Prostate gland (tissue), 2 donors: ENCODE measurements at regions of chr14 and their contacts with region 1.

Region 1: GRCh38 chr14:39169541-39169900 is 612 bp downstream of the TRAPPC6B start:
- DNase-seq: peak; percentile 32
- H3K4me3 ChIP-seq: peak overlapping the region; percentile 74 to 91
- H3K27ac ChIP-seq: peak overlapping the region; percentile 97 to 98
- H3K4me1 ChIP-seq: peaks cover 9% of the 10 kb centered on the region
- H3K27me3 ChIP-seq: no peaks in the 10 kb centered on the region
- CTCF ChIP-seq: no peak
- POLR2A ChIP-seq: no peak

Region 2: GRCh38 chr14:39025810-39026627 is 143.5 kb before region 1 on chr14:
- intact Hi-C with region 1: no loop called
- DNase-seq: no peak
- H3K4me3 ChIP-seq: no peak overlapping the region
- H3K27ac ChIP-seq: no peak overlapping the region
- H3K4me1 ChIP-seq: no peaks in the 10 kb centered on the region
- H3K27me3 ChIP-seq: no peaks in the 10 kb centered on the region
- CTCF ChIP-seq: no peak
- POLR2A ChIP-seq: no peak

Region 3: GRCh38 chr14:39368261-39368959 is 198.9 kb after region 1 on chr14:
- intact Hi-C with region 1: loop called (anchors 5 kb)
- DNase-seq: peak; percentile 26
- H3K4me3 ChIP-seq: no peak overlapping the region
- H3K27ac ChIP-seq: no peak overlapping the region
- H3K4me1 ChIP-seq: no peaks in the 10 kb centered on the region
- H3K27me3 ChIP-seq: no peaks in the 10 kb centered on the region
- CTCF ChIP-seq: peak in 2 of 4 experiments; percentile 43 to 45
- POLR2A ChIP-seq: no peak